CD4-positive, alpha-beta memory T cell (primary cell): ENCODE measurements at regions of chr20 and their contacts with region 1.

Region 1: DNA sequence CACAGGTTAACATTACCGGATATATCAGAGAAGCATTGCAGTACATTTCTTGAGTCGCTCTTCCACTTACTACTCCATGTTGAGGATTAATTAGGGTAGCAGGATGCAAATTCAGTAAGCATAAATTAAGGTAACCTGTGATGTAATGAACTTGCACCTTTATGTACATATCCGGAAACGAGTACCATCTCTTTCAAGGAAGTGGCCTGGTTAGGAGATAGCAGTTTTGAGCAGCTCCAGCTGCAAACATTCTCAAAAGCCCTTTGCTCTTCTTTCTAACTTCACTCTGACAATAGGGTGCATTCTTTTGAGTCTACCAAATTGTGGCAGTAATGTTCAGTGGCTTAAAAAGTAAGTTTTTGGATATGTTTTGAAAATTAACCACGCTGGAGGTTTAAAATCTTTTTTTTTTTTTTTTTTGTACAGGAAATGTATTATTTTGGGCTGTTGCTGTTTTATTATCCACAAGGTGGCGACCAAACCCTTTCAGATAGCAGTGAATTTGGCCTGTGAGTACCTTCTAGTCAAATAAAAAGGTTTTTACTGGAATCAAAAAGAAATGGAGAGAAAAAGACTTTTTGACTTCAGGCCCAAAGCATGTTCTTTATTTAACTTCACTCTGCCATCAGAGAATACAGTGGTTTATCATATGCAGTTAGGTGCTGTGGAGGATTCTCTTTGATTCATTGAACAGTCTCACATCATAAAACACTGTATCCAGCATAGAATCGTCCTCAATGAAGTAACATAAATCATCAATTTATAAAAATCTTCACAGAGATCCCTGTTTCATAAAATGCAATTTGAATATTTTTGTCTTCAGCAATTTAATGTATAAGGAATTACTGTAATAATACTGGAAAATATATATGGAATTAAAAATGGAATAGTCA is 8.9 kb downstream of the FAM217B start:
- DNase-seq: peak; percentile 62 to 71 (median 69)
- H3K4me3 ChIP-seq: no peak overlapping the region
- H3K4me3 Mint-ChIP-seq: peak overlapping the region; percentile 40 to 78 (median 72)
- H3K27ac ChIP-seq: peak overlapping the region; percentile 36
- H3K27ac Mint-ChIP-seq: peak overlapping the region; percentile 82 to 97 (median 91)
- H3K4me1 ChIP-seq: peaks cover 10% of the 10 kb centered on the region
- H3K4me1 Mint-ChIP-seq: peaks cover 11 to 25% (median 12%) of the 10 kb centered on the region in 4 donors
- H3K27me3 ChIP-seq: no peaks in the 10 kb centered on the region
- H3K27me3 Mint-ChIP-seq: no peaks in the 10 kb centered on the region

Region 2: DNA sequence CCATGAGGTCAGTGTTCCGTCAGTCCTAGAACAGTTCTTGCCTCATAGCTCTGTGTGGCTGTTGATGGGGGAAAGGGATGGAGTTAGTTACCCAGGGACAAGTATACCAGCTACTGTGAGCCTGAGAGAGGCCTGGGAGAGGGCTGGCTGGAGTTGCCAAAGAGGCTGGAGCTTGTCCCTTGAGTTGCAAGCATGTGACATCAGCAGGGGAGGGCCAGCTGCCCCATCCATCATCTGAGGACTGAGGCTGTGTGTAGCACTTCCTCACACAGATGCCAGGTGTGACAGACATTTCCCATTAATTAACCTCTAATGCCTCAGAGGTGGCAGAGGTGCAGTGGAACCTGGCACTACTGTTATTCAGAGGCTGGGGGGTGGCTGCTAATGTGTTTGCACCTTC is 213.2 kb before region 1 on chr20:
- CTCF ChIA-PET with region 1: no interaction called
- POLR2A ChIA-PET with region 1: no interaction called
- intact Hi-C with region 1: no loop called
- DNase-seq: no peak
- H3K4me3 ChIP-seq: no peak overlapping the region
- H3K4me3 Mint-ChIP-seq: no peak overlapping the region
- H3K27ac ChIP-seq: no peak overlapping the region
- H3K27ac Mint-ChIP-seq: no peak overlapping the region
- H3K4me1 ChIP-seq: no peaks in the 10 kb centered on the region
- H3K4me1 Mint-ChIP-seq: no peaks in the 10 kb centered on the region
- H3K27me3 ChIP-seq: no peaks in the 10 kb centered on the region
- H3K27me3 Mint-ChIP-seq: peaks cover 3 to 5% of the 10 kb centered on the region in 2 donors

Region 3: GRCh38 chr20:59933849-59934596 is 15.1 kb before region 1 on chr20:
- CTCF ChIA-PET with region 1: interaction called, 120 read pairs
- POLR2A ChIA-PET with region 1: interaction called, 39 read pairs
- intact Hi-C with region 1: loop called (anchors 2 kb)
- DNase-seq: peak; percentile 72 to 82 (median 76)
- H3K4me3 ChIP-seq: peak overlapping the region in 1 of 2 donors; percentile 69
- H3K4me3 Mint-ChIP-seq: peak overlapping the region; percentile 75 to 85 (median 81)
- H3K27ac ChIP-seq: peak overlapping the region; percentile 54
- H3K27ac Mint-ChIP-seq: peak overlapping the region in 6 of 7 donors; percentile 42 to 87 (median 74)
- H3K4me1 ChIP-seq: peaks cover 32% of the 10 kb centered on the region
- H3K4me1 Mint-ChIP-seq: peaks cover 25 to 47% (median 36%) of the 10 kb centered on the region in 4 donors
- H3K27me3 ChIP-seq: no peaks in the 10 kb centered on the region
- H3K27me3 Mint-ChIP-seq: no peaks in the 10 kb centered on the region

Region 4: GRCh38 chr20:60057123-60057801 is 108.2 kb after region 1 on chr20:
- CTCF ChIA-PET with region 1: interaction called, 17 read pairs
- POLR2A ChIA-PET with region 1: interaction called, 5 read pairs
- intact Hi-C with region 1: loop called (anchors 2 kb)
- DNase-seq: peak; percentile 68 to 71 (median 70)
- H3K4me3 ChIP-seq: peak overlapping the region in 1 of 2 donors; percentile 53
- H3K4me3 Mint-ChIP-seq: peak overlapping the region; percentile 79 to 91 (median 85)
- H3K27ac ChIP-seq: peak overlapping the region; percentile 35
- H3K27ac Mint-ChIP-seq: peak overlapping the region; percentile 68 to 92 (median 90)
- H3K4me1 ChIP-seq: peaks cover 48% of the 10 kb centered on the region
- H3K4me1 Mint-ChIP-seq: peaks cover 48 to 81% (median 60%) of the 10 kb centered on the region in 4 donors
- H3K27me3 ChIP-seq: no peaks in the 10 kb centered on the region
- H3K27me3 Mint-ChIP-seq: no peaks in the 10 kb centered on the region

Region 5: DNA sequence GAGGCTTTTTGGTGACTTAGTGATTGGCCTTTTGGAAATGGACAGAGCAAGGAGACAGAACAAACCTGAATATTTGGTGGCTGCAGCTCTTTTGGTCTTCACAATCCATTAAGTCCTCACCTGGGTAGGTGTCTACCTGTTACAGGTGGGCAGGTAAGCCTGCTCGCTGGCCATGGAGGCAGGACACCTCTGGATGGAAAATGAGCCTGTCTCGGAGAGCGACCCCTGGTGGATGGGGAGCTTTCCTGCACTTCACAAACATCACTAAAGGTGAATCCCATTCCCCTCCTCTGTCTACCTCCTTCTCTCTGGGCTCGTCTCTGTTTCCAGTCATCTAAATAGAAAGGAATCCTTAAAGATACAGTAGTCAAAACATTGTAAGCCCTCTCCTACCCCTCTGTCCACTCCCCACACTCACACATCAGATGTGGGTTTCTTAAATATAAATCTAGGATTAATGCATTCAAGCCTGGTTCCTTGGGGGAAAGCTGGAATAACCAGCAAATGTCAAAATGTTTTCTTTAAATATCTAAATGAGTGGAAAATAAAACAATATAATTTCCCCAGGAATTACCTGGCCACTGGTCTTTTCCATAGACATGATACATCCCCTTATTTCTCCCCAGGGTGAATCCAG is 314.0 kb after region 1 on chr20:
- CTCF ChIA-PET with region 1: interaction called, 40 read pairs
- POLR2A ChIA-PET with region 1: no interaction called
- intact Hi-C with region 1: no loop called
- DNase-seq: peak in 4 of 5 donors; percentile 46 to 56 (median 50)
- H3K4me3 ChIP-seq: no peak overlapping the region
- H3K4me3 Mint-ChIP-seq: no peak overlapping the region
- H3K27ac ChIP-seq: no peak overlapping the region
- H3K27ac Mint-ChIP-seq: peak overlapping the region in 2 of 7 donors; percentile 19 to 38
- H3K4me1 ChIP-seq: peaks cover 18% of the 10 kb centered on the region
- H3K4me1 Mint-ChIP-seq: peaks cover 1 to 26% (median 14%) of the 10 kb centered on the region in 4 donors
- H3K27me3 ChIP-seq: no peaks in the 10 kb centered on the region
- H3K27me3 Mint-ChIP-seq: no peaks in the 10 kb centered on the region

Region 6: DNA sequence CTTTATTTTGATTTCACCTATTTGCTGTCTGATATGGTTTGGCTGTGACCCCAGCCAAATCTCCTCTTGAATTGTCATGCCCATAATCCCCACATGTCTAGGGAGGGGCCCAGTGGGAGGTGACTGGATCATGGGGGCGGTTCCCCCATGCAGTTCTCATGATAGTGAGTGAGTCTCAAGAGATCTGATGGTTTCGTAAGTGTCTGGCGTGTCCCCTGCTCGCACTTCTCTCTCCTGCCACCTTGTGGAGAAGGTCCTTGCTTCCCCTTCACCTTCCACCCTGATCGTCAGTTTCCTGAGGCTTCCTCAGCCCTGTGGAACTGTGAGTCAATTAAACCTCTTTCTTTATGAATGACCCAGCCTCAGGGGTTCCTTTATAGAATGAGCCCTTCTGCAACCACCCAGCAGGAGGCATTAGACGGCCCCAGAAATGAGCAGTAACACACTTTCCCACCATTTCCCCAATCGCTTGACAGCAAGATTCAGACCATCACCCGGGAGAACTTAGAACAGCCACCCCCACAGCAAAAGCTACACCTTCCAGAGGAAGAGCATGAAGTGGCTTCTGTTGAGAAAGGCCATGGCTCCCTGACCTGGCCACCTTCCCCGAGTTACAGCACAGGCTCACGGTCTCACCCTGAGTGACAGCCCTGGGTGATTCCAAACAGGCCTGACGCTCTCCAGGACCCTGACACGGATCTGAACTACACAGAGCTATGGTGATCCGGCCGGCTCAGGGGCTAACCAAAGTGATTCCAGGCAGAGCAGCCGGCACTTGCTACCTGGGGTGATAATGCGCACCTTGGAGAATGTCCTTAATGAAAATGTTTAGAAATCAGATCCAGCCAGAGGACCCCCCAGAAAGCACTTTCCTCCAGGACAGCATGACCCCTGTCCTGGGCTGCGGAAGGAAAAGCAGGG is 1171.8 kb after region 1 on chr20:
- CTCF ChIA-PET with region 1: no interaction called
- POLR2A ChIA-PET with region 1: no interaction called
- intact Hi-C with region 1: loop called (anchors 2 kb)
- DNase-seq: peak in 4 of 5 donors; percentile 10 to 29 (median 19)
- H3K4me3 ChIP-seq: no peak overlapping the region
- H3K4me3 Mint-ChIP-seq: peak overlapping the region in 1 of 8 donors; percentile 45
- H3K27ac ChIP-seq: no peak overlapping the region
- H3K27ac Mint-ChIP-seq: no peak overlapping the region
- H3K4me1 ChIP-seq: no peaks in the 10 kb centered on the region
- H3K4me1 Mint-ChIP-seq: peaks cover 0 to 7% (median 5%) of the 10 kb centered on the region in 4 donors
- H3K27me3 ChIP-seq: no peaks in the 10 kb centered on the region
- H3K27me3 Mint-ChIP-seq: peaks cover 2 to 3% of the 10 kb centered on the region in 2 donors

Region 7: GRCh38 chr20:61230166-61230565 is 1281.1 kb after region 1 on chr20:
- CTCF ChIA-PET with region 1: interaction called, 12 read pairs
- POLR2A ChIA-PET with region 1: no interaction called
- intact Hi-C with region 1: no loop called
- DNase-seq: no peak
- H3K4me3 ChIP-seq: no peak overlapping the region
- H3K4me3 Mint-ChIP-seq: no peak overlapping the region
- H3K27ac ChIP-seq: no peak overlapping the region
- H3K27ac Mint-ChIP-seq: no peak overlapping the region
- H3K4me1 ChIP-seq: no peaks in the 10 kb centered on the region
- H3K4me1 Mint-ChIP-seq: peaks cover 1 to 4% (median 3%) of the 10 kb centered on the region in 4 donors
- H3K27me3 ChIP-seq: no peaks in the 10 kb centered on the region
- H3K27me3 Mint-ChIP-seq: peaks cover 4 to 12% of the 10 kb centered on the region in 2 donors

Region 8: DNA sequence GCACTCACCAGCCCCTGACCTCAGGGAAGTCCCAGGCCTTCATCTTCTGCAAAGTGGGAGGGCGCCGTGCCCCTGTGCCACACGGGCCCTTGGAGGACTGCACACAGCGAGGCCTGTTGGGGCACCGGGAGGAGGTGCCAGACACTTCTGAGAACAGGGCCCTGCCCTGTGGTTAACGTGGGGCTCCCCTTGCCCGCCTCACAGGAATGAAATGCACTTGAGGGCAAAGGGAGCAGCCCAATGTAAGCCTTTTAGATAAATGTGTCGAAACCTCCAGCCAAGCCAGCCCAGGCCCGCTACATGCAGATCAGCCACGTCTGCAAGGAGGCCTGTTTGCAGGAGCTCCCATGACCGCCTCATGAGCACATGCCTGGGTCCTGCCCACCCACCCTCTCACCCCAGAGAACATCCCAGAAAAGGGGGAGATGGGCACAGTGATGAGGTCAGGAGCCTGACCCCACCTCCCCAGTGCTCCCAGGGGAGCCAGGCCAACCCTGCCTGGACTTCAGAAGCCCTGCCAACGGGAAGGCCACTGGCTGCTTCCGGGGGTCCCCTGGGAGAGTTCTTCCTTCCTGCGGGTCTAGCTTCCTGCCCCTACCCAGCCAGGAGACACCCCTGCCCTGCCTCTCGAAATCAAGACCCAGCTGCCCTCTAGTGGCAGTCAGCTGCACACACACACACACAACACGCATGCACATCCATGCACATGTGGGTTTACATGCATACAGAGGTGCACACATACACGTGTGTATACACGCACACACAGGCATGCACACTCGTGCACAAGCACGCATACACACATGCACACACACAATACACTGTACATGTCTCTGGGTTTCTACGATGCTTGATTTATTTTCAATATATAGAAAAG is 1937.9 kb after region 1 on chr20:
- CTCF ChIA-PET with region 1: interaction called, 3 read pairs
- POLR2A ChIA-PET with region 1: no interaction called
- intact Hi-C with region 1: loop called (anchors 5 kb)
- DNase-seq: peak in 3 of 5 donors; percentile 11 to 28 (median 12)
- H3K4me3 ChIP-seq: no peak overlapping the region
- H3K4me3 Mint-ChIP-seq: no peak overlapping the region
- H3K27ac ChIP-seq: no peak overlapping the region
- H3K27ac Mint-ChIP-seq: no peak overlapping the region
- H3K4me1 ChIP-seq: no peaks in the 10 kb centered on the region
- H3K4me1 Mint-ChIP-seq: peaks cover 2 to 4% (median 3%) of the 10 kb centered on the region in 4 donors
- H3K27me3 ChIP-seq: no peaks in the 10 kb centered on the region
- H3K27me3 Mint-ChIP-seq: peaks cover 11 to 13% of the 10 kb centered on the region in 2 donors